HCT116 (cell line): ENCODE measurements at regions of chr4 and their contacts with region 1.

Region 1: GRCh38 chr4:146342600-146343192 is 128.4 kb downstream of the REELD1 start:
- DNase-seq: no peak
- ATAC-seq: no peak
- H3K4me3 ChIP-seq: no peak overlapping the region
- H3K27ac ChIP-seq: no peak overlapping the region
- H3K4me1 ChIP-seq: no peaks in the 10 kb centered on the region
- H3K27me3 ChIP-seq: no peaks in the 10 kb centered on the region
- CTCF ChIP-seq: peak; percentile 34 to 64 (median 46); a peak in 3 of 6 replicates
- POLR2A ChIP-seq: no peak
- RAD21 ChIP-seq: peak; percentile 74

Region 2: DNA sequence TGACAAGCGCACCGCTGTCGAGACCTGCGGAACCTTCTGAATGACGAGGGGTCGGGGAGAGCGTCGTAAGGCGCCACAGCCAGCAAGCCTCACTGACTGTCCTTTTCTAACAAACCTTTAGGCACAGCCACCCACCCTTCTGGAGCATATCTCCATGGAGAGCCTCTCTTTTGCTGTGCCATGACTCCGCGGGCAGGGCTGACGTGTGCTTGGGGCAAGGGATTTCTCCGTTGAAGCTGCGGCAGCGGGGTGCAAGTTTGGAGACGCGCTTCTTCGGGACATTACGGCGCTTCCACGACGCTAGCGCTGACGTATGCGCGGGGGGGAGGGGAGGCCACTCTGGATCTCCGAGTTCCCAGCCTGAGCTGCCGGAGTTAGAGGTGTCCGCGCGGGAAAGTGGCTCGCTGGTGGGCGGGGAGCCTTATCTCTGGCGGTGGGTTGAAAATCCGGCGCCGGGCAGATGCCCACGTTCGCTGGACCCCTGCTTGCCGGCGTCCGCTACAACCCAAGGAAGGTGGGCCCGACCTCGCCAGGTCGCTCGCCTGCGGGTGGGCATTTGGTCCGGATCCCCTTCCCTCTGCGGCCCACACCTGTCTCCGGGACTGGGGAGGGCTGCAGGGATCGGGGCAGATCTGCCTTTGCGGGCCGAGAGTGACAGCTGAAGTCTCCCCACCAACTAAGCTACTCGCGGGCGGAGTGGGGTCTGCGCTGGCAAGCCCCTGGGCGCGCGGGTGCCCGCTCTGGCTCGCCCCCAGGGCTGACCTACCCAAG is 179.6 kb after region 1 on chr4:
- CTCF ChIA-PET with region 1: no interaction called
- POLR2A ChIA-PET with region 1: no interaction called
- RAD21 ChIA-PET with region 1: no interaction called
- intact Hi-C with region 1: loop called (anchors 5 kb)
- DNase-seq: peak; percentile 64
- ATAC-seq: peak; percentile 86
- H3K4me3 ChIP-seq: peak overlapping the region; percentile 83 to 85
- H3K27ac ChIP-seq: peak overlapping the region; percentile 71; the same call in 1 of the 2 replicates
- H3K4me1 ChIP-seq: peaks cover 0 to 7% of the 10 kb centered on the region in 2 experiments; a peak in 2 of 4 replicates
- H3K27me3 ChIP-seq: no peaks in the 10 kb centered on the region
- CTCF ChIP-seq: no peak
- POLR2A ChIP-seq: peak; percentile 60
- RAD21 ChIP-seq: no peak

Region 3: GRCh38 chr4:147019061-147019460 is 676.4 kb after region 1 on chr4:
- CTCF ChIA-PET with region 1: interaction called, 3 read pairs
- POLR2A ChIA-PET with region 1: no interaction called
- RAD21 ChIA-PET with region 1: no interaction called
- intact Hi-C with region 1: loop called (anchors 5 kb)
- DNase-seq: peak; percentile 36
- ATAC-seq: peak; percentile 94
- H3K4me3 ChIP-seq: no peak overlapping the region
- H3K27ac ChIP-seq: no peak overlapping the region
- H3K4me1 ChIP-seq: no peaks in the 10 kb centered on the region
- H3K27me3 ChIP-seq: peaks cover 32% of the 10 kb centered on the region
- CTCF ChIP-seq: peak; percentile 65 to 72 (median 67); a peak in 5 of 6 replicates
- POLR2A ChIP-seq: no peak
- RAD21 ChIP-seq: peak; percentile 89

Region 4: GRCh38 chr4:147096667-147097604 is 754.2 kb after region 1 on chr4:
- CTCF ChIA-PET with region 1: interaction called, 29 read pairs
- POLR2A ChIA-PET with region 1: no interaction called
- RAD21 ChIA-PET with region 1: interaction called in 1 of 2 experiments, 3 read pairs
- intact Hi-C with region 1: loop called (anchors 1 kb)
- DNase-seq: peak; percentile 32
- ATAC-seq: peak; percentile 76
- H3K4me3 ChIP-seq: no peak overlapping the region
- H3K27ac ChIP-seq: no peak overlapping the region
- H3K4me1 ChIP-seq: no peaks in the 10 kb centered on the region
- H3K27me3 ChIP-seq: peaks cover 37% of the 10 kb centered on the region
- CTCF ChIP-seq: peak; percentile 50 to 72 (median 55); a peak in 5 of 6 replicates
- POLR2A ChIP-seq: no peak
- RAD21 ChIP-seq: peak; percentile 81